Heart right ventricle (tissue), 16 donors: ENCODE measurements at regions of chr12 and their contacts with region 1.

Region 1: GRCh38 chr12:32069071-32069470 is 37.6 kb upstream of the BICD1 start:
- DNase-seq: no peak
- ATAC-seq: no peak
- H3K4me3 ChIP-seq: no peak overlapping the region
- H3K27ac ChIP-seq: no peak overlapping the region
- H3K4me1 ChIP-seq: no peaks in the 10 kb centered on the region
- H3K27me3 ChIP-seq: no peaks in the 10 kb centered on the region
- CTCF ChIP-seq: no peak

Region 2: GRCh38 chr12:31406345-31406744 is 662.7 kb before region 1 on chr12:
- intact Hi-C with region 1: loop called in 1 of 10 experiments (anchors 10 kb)
- DNase-seq: no peak
- ATAC-seq: no peak
- H3K4me3 ChIP-seq: no peak overlapping the region
- H3K27ac ChIP-seq: no peak overlapping the region
- H3K4me1 ChIP-seq: peaks cover 0 to 12% (median 0%) of the 10 kb centered on the region in 9 donors
- H3K27me3 ChIP-seq: no peaks in the 10 kb centered on the region
- CTCF ChIP-seq: no peak

Region 3: DNA sequence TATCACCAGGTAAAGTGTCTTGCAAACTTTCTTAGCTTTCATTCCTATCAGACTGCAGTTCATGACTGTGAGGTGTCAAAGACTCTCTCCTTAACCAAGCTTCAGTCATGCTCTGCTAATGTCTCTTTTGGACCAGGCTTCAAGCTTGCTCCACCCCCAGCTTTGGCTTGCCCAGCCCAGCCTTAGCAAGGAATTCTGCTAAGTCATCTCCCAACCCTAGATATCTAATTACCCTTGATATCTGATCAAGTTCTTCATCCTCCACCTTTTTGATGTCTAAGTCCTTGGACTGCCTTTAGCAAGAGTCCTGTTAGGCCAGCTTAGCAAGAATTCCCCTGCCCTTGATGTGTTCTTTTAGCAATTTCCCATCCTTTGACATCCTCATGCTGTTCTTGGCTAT is 221.3 kb after region 1 on chr12:
- intact Hi-C with region 1: loop called in 1 of 10 experiments (anchors 10 kb)
- DNase-seq: no peak
- ATAC-seq: no peak
- H3K4me3 ChIP-seq: no peak overlapping the region
- H3K27ac ChIP-seq: no peak overlapping the region
- H3K4me1 ChIP-seq: peaks cover 0 to 6% (median 0%) of the 10 kb centered on the region in 9 donors
- H3K27me3 ChIP-seq: no peaks in the 10 kb centered on the region
- CTCF ChIP-seq: no peak

Region 4: GRCh38 chr12:32679091-32679919 is 610.2 kb after region 1 on chr12 and contains the start of gene DNM1L:
- intact Hi-C with region 1: loop called in 1 of 10 experiments (anchors 10 kb)
- DNase-seq: peak; percentile 93 to 95
- ATAC-seq: peak; percentile 98 to 99 (median 99)
- H3K4me3 ChIP-seq: peak within 1 kb of the TSS; percentile 47 to 100 (median 90)
- H3K27ac ChIP-seq: peak within 1 kb of the TSS; percentile 80 to 97 (median 94)
- H3K4me1 ChIP-seq: peaks cover 0 to 24% (median 12%) of the 10 kb centered on the region in 9 donors
- H3K27me3 ChIP-seq: no peaks in the 10 kb centered on the region
- CTCF ChIP-seq: peak in 7 of 9 donors; percentile 7 to 35 (median 21)
- total RNA-seq, gene DNM1L: 52.6 to 81.5 (median 59.0) TPM